Naive thymus-derived CD4-positive, alpha-beta T cell (primary cell): ENCODE measurements at regions of chr2 and their contacts with region 1.

Region 1: GRCh38 chr2:237512774-237513466 is 25.9 kb downstream of the MLPH start:
- DNase-seq: peak; percentile 55 to 76 (median 72)
- ATAC-seq: peak; percentile 85
- H3K4me3 ChIP-seq: no peak overlapping the region
- H3K4me3 Mint-ChIP-seq: no peak overlapping the region
- H3K27ac ChIP-seq: no peak overlapping the region
- H3K27ac Mint-ChIP-seq: no peak overlapping the region
- H3K4me1 ChIP-seq: no peaks in the 10 kb centered on the region
- H3K4me1 Mint-ChIP-seq: no peaks in the 10 kb centered on the region
- H3K27me3 ChIP-seq: no peaks in the 10 kb centered on the region
- H3K27me3 Mint-ChIP-seq: peaks cover 0 to 6% (median 0%) of the 10 kb centered on the region in 5 donors

Region 2: DNA sequence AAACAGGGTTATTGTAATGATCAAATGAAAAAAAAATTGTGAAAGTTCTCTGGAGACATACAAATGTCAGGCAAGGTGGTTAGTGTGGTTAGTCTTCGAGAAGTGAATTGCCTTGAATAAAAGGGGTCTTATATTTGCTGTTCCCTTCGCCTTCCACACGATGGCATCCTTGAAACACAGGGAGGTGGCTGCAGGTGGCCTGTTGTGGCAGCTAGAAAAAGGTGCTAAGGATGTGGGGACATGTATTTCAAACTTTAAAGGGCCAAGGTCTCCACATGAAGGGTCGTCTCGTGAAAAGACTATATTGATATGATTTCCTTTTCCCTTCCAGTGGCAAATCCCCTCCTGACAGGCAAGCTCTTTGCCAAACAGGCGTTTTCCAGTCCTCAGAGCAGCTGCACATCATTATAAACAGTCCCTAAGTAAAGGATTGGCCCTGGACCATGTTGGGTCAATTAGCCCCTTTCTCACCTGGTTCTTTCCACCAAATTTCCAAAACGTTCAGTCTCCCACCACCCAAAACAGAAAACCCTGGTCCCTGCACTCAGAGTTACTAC is 358.8 kb before region 1 on chr2:
- CTCF ChIA-PET with region 1: interaction called, 10 read pairs
- POLR2A ChIA-PET with region 1: no interaction called
- intact Hi-C with region 1: loop called (anchors 1 kb)
- DNase-seq: peak; percentile 21 to 74 (median 60)
- ATAC-seq: peak; percentile 72
- H3K4me3 ChIP-seq: no peak overlapping the region
- H3K4me3 Mint-ChIP-seq: no peak overlapping the region
- H3K27ac ChIP-seq: no peak overlapping the region
- H3K27ac Mint-ChIP-seq: no peak overlapping the region
- H3K4me1 ChIP-seq: no peaks in the 10 kb centered on the region
- H3K4me1 Mint-ChIP-seq: peaks cover 0 to 23% (median 8%) of the 10 kb centered on the region in 7 donors
- H3K27me3 ChIP-seq: no peaks in the 10 kb centered on the region
- H3K27me3 Mint-ChIP-seq: no peaks in the 10 kb centered on the region

Region 3: DNA sequence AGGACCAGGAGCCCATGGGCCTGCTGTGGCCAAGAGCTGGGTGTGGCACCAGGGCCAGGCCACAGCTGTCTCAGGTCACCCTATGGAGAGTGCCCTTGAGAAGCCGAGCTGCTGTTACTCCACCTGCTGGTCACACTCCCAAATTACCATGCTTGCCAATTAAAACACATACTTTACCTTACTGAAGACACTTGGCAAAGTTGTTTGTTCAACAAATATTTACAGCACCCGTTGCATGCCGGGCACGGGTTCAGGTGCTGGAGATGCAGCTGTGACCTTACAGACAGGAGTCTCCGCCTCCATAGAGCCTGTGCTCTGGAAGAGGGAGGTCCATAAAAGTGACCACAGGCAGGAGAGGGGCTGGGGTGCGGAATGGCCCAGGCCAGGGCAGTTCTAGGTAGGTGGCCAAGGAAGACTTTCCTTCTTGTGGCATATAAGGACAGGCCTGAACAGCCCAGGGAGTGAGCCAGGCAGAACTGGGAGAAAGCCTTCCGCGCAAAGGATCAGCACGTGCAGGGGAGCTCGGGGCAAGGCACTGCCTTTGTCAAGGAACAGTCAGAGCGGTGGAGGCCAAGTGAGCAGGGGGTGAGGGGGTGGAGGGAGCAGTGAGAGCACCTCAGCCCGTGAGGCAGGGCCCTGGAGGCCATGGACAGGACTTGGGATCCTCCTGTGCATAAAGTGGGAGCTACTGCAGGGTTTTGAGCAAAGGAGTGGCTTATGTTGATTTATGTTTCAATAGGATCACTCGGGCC is 262.1 kb after region 1 on chr2:
- CTCF ChIA-PET with region 1: interaction called, 3 read pairs
- POLR2A ChIA-PET with region 1: no interaction called
- intact Hi-C with region 1: loop called in 1 of 2 experiments (anchors 1 kb)
- DNase-seq: peak in 7 of 9 donors; percentile 13 to 37 (median 26)
- ATAC-seq: peak; percentile 80
- H3K4me3 ChIP-seq: no peak overlapping the region
- H3K4me3 Mint-ChIP-seq: no peak overlapping the region
- H3K27ac ChIP-seq: no peak overlapping the region
- H3K27ac Mint-ChIP-seq: peak overlapping the region in 6 of 9 donors; percentile 21 to 82 (median 62)
- H3K4me1 ChIP-seq: no peaks in the 10 kb centered on the region
- H3K4me1 Mint-ChIP-seq: peaks cover 0 to 4% (median 0%) of the 10 kb centered on the region in 7 donors
- H3K27me3 ChIP-seq: no peaks in the 10 kb centered on the region
- H3K27me3 Mint-ChIP-seq: no peaks in the 10 kb centered on the region